ENCODE measurements at regions of chr5 and their contacts with region 1.

Region 1: GRCh38 chr5:179763215-179763945 is 30.4 kb upstream of the LTC4S start:
- DNase-seq: peak; percentile 34 to 71
- ATAC-seq: peak in 7 of 8 donors; percentile 50 to 85 (median 80)
- H3K4me3 ChIP-seq: no peak overlapping the region
- H3K27ac ChIP-seq: peak overlapping the region in 3 of 10 donors; percentile 14 to 24 (median 16)
- H3K4me1 ChIP-seq: peaks cover 6 to 96% (median 77%) of the 10 kb centered on the region in 9 donors
- H3K27me3 ChIP-seq: no peaks in the 10 kb centered on the region
- CTCF ChIP-seq: peak; percentile 76 to 97 (median 87)

Region 2: GRCh38 chr5:179732417-179732917 is 30.9 kb before region 1 on chr5 and contains the start of gene MAML1:
- intact Hi-C with region 1: loop called in 1 of 10 experiments (anchors 5 kb)
- DNase-seq: peak; percentile 99 to 100
- ATAC-seq: peak; percentile 99 to 100 (median 99)
- H3K4me3 ChIP-seq: peak within 1 kb of the TSS; percentile 60 to 99 (median 74)
- H3K27ac ChIP-seq: peak within 1 kb of the TSS; percentile 82 to 98 (median 96)
- H3K4me1 ChIP-seq: peaks cover 8 to 54% (median 44%) of the 10 kb centered on the region in 9 donors
- H3K27me3 ChIP-seq: no peaks in the 10 kb centered on the region
- CTCF ChIP-seq: no peak
- total RNA-seq, gene MAML1: 10.0 to 15.3 (median 12.5) TPM

Region 3: GRCh38 chr5:179795863-179796833 is 32.8 kb after region 1 on chr5:
- intact Hi-C with region 1: loop called in 8 of 10 experiments (anchors 1 to 5 kb)
- DNase-seq: peak; percentile 78 to 84
- ATAC-seq: peak; percentile 64 to 77 (median 70)
- H3K4me3 ChIP-seq: peak overlapping the region; percentile 43 to 84 (median 66)
- H3K27ac ChIP-seq: peak overlapping the region; percentile 71 to 92 (median 85)
- H3K4me1 ChIP-seq: peaks cover 33 to 57% (median 54%) of the 10 kb centered on the region in 9 donors
- H3K27me3 ChIP-seq: no peaks in the 10 kb centered on the region
- CTCF ChIP-seq: peak; percentile 68 to 98 (median 86)

Region 4: GRCh38 chr5:179858586-179859427 is 95.4 kb after region 1 on chr5 and contains the start of gene MRNIP:
- intact Hi-C with region 1: loop called in 1 of 10 experiments (anchors 10 kb)
- DNase-seq: peak; percentile 97 to 98
- ATAC-seq: peak; percentile 99 to 100 (median 99)
- H3K4me3 ChIP-seq: peak within 1 kb of the TSS; percentile 48 to 99 (median 86)
- H3K27ac ChIP-seq: peak within 1 kb of the TSS; percentile 82 to 96 (median 92)
- H3K4me1 ChIP-seq: peaks cover 0 to 30% (median 17%) of the 10 kb centered on the region in 9 donors
- H3K27me3 ChIP-seq: no peaks in the 10 kb centered on the region
- CTCF ChIP-seq: peak in 6 of 9 donors; percentile 5 to 48 (median 30)
- total RNA-seq, gene MRNIP: 6.6 to 14.4 (median 12.7) TPM

Measured in heart right ventricle (tissue), 16 donors.